ENCODE measurements at regions of chr10 and their contacts with region 1.

Region 1: DNA sequence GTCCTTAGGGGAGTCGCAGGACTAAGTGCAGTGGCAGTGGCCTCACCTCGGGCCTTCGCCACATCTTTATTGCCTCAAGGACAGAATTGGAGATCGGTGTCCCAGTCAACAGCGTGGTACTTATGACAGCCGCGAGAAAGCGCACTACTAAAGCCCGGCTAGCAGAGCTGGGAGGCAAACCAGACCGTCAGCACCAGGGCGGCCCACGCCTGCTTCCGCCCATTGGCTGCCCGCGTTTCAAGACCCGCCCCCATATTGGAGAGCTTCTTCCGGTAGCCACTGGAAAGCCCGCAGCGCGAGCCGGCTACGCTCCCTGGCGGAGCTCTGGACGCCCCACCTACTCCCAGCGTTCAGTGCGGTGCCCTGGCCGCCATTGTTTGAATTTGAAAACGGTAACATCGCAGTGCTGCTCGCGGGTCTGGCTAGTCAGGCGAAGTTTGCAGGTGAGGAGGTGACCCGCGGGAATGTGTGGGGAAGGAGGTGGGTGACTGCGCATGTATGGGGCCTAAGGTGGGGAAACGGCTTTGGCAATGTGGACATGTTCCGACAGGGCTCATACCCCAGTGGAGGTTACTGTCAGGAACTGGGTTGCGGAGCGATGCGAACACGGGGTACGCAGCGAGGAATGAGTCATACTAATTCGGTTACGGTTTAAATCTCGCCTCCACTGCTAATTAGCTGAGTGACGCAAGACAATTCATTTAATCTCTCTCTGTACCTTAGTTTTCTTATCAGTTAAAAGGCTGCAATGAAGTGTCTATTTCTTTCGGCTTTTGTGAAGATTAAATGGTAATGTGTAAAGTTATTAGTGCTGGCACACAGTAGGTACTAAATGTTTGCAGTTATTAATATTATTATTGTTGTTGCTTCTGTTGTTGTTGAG is at the start of gene KIF20B:
- DNase-seq: peak; percentile 98
- total RNA-seq, gene KIF20B: 1.9 TPM

Region 2: GRCh38 chr10:89426230-89426868 is 275.1 kb before region 1 on chr10:
- intact Hi-C with region 1: loop called (anchors 5 kb)
- DNase-seq: no peak

Region 3: GRCh38 chr10:89563861-89564478 is 137.5 kb before region 1 on chr10:
- intact Hi-C with region 1: loop called (anchors 5 kb)
- DNase-seq: no peak

Region 4: DNA sequence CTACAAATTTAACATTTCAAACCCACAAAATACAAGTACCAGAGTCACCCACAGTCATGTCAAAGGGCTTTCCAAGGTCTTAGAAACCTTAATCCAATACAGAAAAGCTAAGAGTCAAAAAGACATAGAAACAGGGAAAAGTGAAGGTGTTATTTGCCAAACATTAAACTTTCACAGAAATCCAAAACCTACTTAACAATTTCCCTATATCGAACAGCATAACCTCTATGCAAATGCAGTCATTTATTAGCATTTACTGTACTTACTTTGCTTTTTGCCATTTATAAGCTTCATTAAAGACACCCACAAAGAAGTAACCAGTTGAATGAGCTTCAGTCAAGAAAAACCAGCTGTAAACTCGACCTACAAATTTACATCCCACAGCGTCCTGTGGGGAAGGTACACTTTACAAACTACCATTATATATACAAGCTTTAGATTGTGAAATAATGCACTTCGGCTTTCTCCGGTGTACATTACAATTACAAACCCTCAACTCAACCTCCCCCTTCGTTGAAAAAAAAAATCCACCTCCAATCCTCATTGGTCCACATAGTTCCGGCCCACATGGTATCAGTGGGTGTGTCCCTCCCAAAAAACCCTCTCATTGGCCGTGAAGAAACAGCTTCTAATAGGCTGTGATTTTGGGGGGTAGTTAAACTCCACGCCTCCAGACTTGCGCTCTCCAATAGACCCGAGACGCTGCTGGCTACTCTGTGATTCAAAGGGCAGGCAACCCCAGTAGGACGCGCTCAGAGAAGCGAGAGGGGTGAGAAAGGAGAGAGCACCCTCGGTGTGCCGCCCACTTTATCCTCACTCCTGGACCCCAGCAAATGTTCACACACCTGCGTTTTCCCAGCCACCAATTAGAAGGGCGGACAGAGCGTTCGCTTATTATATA is 57.8 kb before region 1 on chr10:
- intact Hi-C with region 1: loop called (anchors 2 kb)
- DNase-seq: peak; percentile 87